ENCODE measurements at regions of chr7 and their contacts with region 1.

Region 1: GRCh38 chr7:45863715-45864114 is 9.2 kb downstream of the CCDC201 start:
- DNase-seq: peak; percentile 69
- ATAC-seq: peak; percentile 94
- H3K4me3 Mint-ChIP-seq: no peak overlapping the region
- H3K27ac Mint-ChIP-seq: no peak overlapping the region
- H3K4me1 Mint-ChIP-seq: no peaks in the 10 kb centered on the region
- H3K27me3 Mint-ChIP-seq: no peaks in the 10 kb centered on the region; the same call in 1 of the 2 replicates
- CTCF ChIP-seq: no peak

Region 2: GRCh38 chr7:45890902-45891461 is 27.3 kb after region 1 on chr7:
- CTCF ChIA-PET with region 1: interaction called, 13 read pairs
- POLR2A ChIA-PET with region 1: no interaction called
- DNase-seq: no peak
- ATAC-seq: no peak
- H3K4me3 Mint-ChIP-seq: no peak overlapping the region
- H3K27ac Mint-ChIP-seq: no peak overlapping the region
- H3K4me1 Mint-ChIP-seq: peaks cover 16% of the 10 kb centered on the region
- H3K27me3 Mint-ChIP-seq: peaks cover 51% of the 10 kb centered on the region
- CTCF ChIP-seq: peak; percentile 29; the same call in 1 of the 2 replicates

Measured in WTC11 (cell line).